PC-3 (cell line): ENCODE measurements at regions of chr14 and their contacts with region 1.

Region 1: GRCh38 chr14:90758028-90758889 is 58.0 kb downstream of the TTC7B start:
- DNase-seq: peak; percentile 98
- ATAC-seq: peak; percentile 96
- H3K4me3 ChIP-seq: peak overlapping the region; percentile 67
- H3K27ac ChIP-seq: peak overlapping the region; percentile 64
- H3K4me1 ChIP-seq: peaks cover 12% of the 10 kb centered on the region
- H3K27me3 ChIP-seq: no peaks in the 10 kb centered on the region
- CTCF ChIP-seq: peak; percentile 79

Region 2: GRCh38 chr14:90301668-90302090 is 456.6 kb before region 1 on chr14:
- CTCF ChIA-PET with region 1: interaction called, 3 read pairs
- POLR2A ChIA-PET with region 1: interaction called, 3 read pairs
- intact Hi-C with region 1: loop called (anchors 1 kb)
- DNase-seq: peak; percentile 60
- ATAC-seq: peak; percentile 69
- H3K4me3 ChIP-seq: no peak overlapping the region
- H3K27ac ChIP-seq: no peak overlapping the region
- H3K4me1 ChIP-seq: no peaks in the 10 kb centered on the region
- H3K27me3 ChIP-seq: no peaks in the 10 kb centered on the region
- CTCF ChIP-seq: peak; percentile 66

Region 3: DNA sequence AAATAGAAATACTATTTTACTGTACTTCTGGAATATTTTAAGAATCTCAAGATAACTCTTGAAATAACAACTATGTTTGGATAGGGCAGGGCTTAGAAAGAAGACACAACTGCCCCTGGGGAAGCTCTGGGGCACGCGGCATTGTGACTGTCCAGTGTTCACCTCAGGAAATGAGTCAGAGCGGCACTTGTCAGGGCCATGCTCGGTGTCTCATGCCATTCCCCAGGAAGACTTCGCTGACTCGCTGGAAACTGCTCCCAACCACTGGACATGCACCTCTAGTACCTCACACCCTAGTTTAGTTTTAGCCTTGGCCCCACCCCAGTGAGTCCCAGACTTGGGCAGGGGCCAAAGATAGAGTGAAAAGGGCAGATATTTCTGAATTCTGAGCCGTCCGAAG is 134.0 kb before region 1 on chr14:
- CTCF ChIA-PET with region 1: no interaction called
- POLR2A ChIA-PET with region 1: no interaction called
- intact Hi-C with region 1: loop called (anchors 5 kb)
- DNase-seq: peak; percentile 82
- ATAC-seq: peak; percentile 99
- H3K4me3 ChIP-seq: no peak overlapping the region
- H3K27ac ChIP-seq: peak overlapping the region; percentile 16; the same call in 1 of the 2 replicates
- H3K4me1 ChIP-seq: peaks cover 20% of the 10 kb centered on the region
- H3K27me3 ChIP-seq: no peaks in the 10 kb centered on the region
- CTCF ChIP-seq: no peak

Region 4: DNA sequence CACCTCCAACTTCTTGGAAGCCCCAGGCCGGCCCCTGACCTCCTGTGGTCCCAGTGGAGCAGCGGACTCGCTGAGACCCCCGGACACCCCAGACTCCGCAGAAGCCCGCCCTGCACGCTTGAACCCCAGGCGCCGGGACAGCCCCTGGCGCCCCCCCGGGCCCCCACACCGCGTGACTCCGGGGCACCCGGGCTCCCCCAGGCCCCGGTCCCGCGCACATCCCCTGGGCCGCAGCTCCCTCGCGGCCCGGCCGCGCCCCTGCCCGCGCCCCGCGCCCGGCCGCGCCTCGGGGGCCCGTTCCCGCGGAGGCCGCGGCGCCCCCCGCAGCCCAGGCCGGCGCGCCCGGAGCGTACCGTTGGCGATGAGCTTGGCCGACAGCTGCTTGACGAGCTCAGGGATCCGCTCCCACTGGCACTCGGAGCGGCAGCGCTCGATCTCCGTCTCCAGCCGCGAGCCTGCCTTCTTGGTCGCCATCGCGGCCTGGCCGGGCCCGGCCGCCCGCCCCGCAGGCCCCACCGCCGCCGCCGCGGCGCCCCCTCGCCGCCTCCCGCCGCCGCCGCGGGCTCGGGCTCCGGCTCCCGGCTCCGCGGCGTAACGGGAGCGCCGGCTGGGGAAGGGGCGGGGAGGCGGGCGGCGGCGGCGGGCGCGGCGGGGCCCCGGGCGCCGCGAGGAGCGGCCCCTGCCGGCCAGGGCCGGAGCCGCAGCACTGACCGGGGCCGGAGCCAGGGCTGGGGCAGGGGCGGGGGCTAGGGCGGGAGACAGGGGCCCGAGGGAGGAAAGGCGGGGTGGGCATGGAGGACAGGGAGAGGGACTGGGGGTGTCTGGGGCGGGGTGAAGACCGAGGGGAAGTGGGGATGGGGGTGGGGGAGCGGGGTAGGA is 57.8 kb after region 1 on chr14 and contains the start of gene TTC7B:
- CTCF ChIA-PET with region 1: interaction called, 11 read pairs
- POLR2A ChIA-PET with region 1: interaction called, 15 read pairs
- intact Hi-C with region 1: no loop called
- DNase-seq: peak; percentile 50
- ATAC-seq: peak; percentile 84
- H3K4me3 ChIP-seq: peak within 1 kb of the TSS; percentile 91
- H3K27ac ChIP-seq: no peak within 1 kb of the TSS
- H3K4me1 ChIP-seq: peaks cover 8% of the 10 kb centered on the region
- H3K27me3 ChIP-seq: no peaks in the 10 kb centered on the region
- CTCF ChIP-seq: no peak
- total RNA-seq, gene TTC7B: 43.2 and 45.6 TPM in 2 replicates

Region 5: DNA sequence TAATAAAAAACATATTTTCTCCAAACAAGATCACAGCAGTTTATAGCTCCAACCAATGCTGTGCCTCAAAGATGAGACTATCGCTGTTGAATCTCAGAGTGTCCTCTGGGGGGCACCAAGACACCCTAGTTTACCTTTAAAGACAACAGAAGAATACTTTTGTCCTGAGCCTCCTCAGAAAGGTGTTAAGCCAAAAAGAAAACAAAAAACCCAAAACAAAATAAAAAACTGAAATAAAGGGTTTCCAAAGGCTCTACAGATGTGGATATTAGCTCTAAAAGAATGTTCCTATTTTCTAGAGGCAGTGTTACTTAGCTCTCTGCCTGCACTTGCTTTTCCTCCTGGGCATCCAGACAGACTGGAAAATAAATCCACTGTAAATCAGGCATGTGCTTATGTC is 144.8 kb after region 1 on chr14:
- CTCF ChIA-PET with region 1: interaction called, 3 read pairs
- POLR2A ChIA-PET with region 1: no interaction called
- intact Hi-C with region 1: loop called (anchors 5 kb)
- DNase-seq: peak; percentile 75
- ATAC-seq: peak; percentile 99
- H3K4me3 ChIP-seq: no peak overlapping the region
- H3K27ac ChIP-seq: no peak overlapping the region
- H3K4me1 ChIP-seq: no peaks in the 10 kb centered on the region
- H3K27me3 ChIP-seq: no peaks in the 10 kb centered on the region
- CTCF ChIP-seq: peak; percentile 91